Psoas muscle (tissue), 8 donors: ENCODE measurements at regions of chr7 and their contacts with region 1.

Region 1: GRCh38 chr7:6160191-6160623 is 112.2 kb downstream of the CYTH3 start:
- DNase-seq: peak; percentile 71 to 87
- ATAC-seq: peak; percentile 78 to 86 (median 84)
- H3K4me3 ChIP-seq: no peak overlapping the region
- H3K27ac ChIP-seq: no peak overlapping the region
- H3K4me1 ChIP-seq: no peaks in the 10 kb centered on the region
- H3K27me3 ChIP-seq: no peaks in the 10 kb centered on the region
- CTCF ChIP-seq: peak; percentile 76

Region 2: GRCh38 chr7:6323967-6324701 is 163.9 kb after region 1 on chr7:
- intact Hi-C with region 1: loop called (anchors 1 to 2 kb)
- DNase-seq: peak in 1 of 2 donors; percentile 23
- ATAC-seq: no peak
- H3K4me3 ChIP-seq: no peak overlapping the region
- H3K27ac ChIP-seq: no peak overlapping the region
- H3K4me1 ChIP-seq: no peaks in the 10 kb centered on the region
- H3K27me3 ChIP-seq: no peaks in the 10 kb centered on the region
- CTCF ChIP-seq: no peak

Region 3: DNA sequence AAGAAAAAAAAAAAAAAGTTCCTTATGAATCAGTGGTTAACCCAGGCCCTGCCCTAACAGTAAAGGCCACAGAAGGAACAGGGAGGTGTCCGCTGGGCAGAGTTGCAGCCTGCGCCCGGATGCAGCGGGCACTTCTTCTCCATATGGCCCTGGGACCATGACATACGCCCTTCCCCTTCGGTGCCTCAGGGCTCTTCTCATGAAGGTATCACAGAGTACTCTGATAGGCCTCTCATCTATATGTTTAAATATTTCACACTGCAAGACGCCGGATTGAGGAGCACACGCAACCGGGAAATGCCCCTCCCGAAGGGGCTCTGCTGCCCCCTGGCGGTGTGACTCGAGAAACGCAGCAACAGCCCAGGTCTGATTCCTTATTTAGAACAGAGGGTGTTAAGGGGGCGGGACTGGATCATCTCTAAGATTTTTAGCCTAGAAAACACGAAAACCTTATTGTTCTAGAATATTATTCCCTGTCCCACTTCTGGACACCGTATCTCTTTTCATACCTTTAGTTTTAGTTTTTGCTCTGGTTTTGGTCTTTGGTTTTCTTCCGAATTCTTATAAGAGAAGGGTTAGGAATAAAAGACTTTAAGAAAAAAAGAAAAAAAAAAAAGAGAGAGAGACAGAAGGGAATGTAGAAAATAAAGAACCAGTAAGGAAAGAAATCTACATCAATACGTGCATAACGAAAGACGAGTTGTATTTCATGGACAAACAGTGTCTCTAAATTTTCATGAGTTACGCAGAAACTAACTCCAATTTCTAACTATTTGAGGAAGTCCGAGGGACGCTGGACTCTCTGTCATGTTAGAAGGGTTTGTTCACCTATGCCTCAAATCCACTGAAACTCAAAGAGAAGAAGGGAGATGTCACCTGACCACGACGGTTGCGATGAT is 275.5 kb after region 1 on chr7:
- intact Hi-C with region 1: loop called in 1 of 2 experiments (anchors 5 kb)
- DNase-seq: peak; percentile 79 to 90
- ATAC-seq: peak; percentile 28 to 74 (median 66)
- H3K4me3 ChIP-seq: no peak overlapping the region
- H3K27ac ChIP-seq: peak overlapping the region; percentile 84
- H3K4me1 ChIP-seq: peaks cover 55% of the 10 kb centered on the region
- H3K27me3 ChIP-seq: no peaks in the 10 kb centered on the region
- CTCF ChIP-seq: peak; percentile 98